Heart right ventricle (tissue), 16 donors: ENCODE measurements at regions of chr7 and their contacts with region 1.

Region 1: DNA sequence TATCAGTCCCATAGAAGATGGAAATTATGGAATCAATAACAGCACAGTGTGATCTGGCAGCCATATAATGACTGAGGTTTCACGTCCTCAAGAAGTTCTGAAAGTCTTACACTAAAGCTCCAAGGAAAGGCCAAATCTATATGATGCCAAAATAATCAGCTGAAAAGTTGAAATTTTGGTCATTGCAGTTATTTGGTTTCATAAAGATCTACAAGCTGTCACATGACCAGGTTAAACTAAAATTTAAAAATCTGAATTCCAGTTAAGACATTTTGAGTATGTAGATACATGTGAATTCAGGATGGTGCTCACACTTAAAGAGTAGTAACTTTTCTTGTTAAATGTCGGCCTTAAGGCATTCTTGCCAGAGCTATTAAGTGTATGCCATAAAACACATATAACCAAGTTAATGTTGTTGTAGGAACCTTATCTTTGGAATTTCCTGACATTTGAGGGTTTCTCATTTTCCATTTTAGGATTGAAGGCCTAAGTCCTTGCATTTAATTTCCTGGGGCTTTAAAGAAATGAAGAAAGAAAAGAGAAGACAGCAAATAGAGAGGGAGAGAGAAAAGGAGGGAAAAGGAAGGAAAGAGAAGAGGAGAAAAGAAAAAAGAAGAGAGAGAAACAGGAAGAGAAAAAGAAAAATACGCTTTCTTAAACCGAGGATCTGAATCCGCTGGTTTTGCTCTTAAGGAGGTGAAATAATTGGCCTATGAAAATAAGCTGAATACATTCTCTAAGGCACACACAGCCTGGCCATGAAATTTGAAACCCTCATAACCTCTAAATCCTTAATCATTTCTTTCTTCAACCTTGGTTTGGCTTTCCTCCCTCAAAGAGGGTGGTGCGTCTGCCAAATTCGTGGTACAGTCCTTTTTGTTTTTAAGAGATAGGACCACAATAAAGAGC is 43.8 kb downstream of the DENND2A start:
- DNase-seq: no peak
- ATAC-seq: peak in 3 of 8 donors; percentile 10 to 39 (median 31)
- H3K4me3 ChIP-seq: no peak overlapping the region
- H3K27ac ChIP-seq: peak overlapping the region in 8 of 10 donors; percentile 10 to 72 (median 55)
- H3K4me1 ChIP-seq: peaks cover 0 to 48% (median 11%) of the 10 kb centered on the region in 9 donors
- H3K27me3 ChIP-seq: no peaks in the 10 kb centered on the region
- CTCF ChIP-seq: no peak

Region 2: DNA sequence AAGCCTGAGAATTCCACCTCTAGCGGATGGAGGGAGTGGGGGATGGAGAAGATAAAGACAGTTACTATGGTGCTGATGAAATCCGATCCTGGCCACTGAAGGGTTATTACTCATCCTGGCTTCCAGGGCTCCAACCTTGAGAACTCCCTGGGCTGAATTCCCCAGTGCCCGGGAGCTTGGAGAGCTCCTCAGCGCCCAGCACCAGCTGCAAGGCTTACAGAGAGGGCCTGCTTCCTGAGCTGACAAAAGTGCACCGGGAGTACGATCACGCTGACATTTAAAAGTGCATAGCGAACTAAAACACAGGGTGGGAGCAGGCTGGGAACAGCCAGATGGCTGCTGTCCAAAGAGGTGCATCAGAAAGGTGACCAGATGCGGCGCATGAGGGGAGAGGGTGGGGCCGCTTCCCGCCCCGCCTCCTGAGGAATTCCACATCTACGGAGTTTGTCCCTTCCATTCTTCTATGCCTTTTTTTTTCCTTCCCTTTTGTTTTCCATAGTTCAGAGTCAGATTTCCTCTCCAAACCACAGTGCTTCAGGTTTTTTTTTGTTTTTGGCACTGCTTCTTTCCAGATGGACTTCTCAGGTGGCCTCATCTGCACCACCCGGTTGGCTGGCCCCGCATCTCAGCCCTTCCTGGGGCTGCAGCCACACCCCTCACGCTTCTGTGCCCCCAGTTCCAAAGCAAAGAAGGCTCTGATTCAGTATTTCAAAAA is 55.1 kb before region 1 on chr7:
- intact Hi-C with region 1: loop called in 1 of 10 experiments (anchors 5 kb)
- DNase-seq: peak; percentile 38 to 66
- ATAC-seq: peak; percentile 60 to 93 (median 84)
- H3K4me3 ChIP-seq: peak overlapping the region in 6 of 10 donors; percentile 2 to 16 (median 3)
- H3K27ac ChIP-seq: peak overlapping the region; percentile 49 to 89 (median 66)
- H3K4me1 ChIP-seq: peaks cover 12 to 33% (median 21%) of the 10 kb centered on the region in 9 donors
- H3K27me3 ChIP-seq: no peaks in the 10 kb centered on the region
- CTCF ChIP-seq: no peak

Region 3: DNA sequence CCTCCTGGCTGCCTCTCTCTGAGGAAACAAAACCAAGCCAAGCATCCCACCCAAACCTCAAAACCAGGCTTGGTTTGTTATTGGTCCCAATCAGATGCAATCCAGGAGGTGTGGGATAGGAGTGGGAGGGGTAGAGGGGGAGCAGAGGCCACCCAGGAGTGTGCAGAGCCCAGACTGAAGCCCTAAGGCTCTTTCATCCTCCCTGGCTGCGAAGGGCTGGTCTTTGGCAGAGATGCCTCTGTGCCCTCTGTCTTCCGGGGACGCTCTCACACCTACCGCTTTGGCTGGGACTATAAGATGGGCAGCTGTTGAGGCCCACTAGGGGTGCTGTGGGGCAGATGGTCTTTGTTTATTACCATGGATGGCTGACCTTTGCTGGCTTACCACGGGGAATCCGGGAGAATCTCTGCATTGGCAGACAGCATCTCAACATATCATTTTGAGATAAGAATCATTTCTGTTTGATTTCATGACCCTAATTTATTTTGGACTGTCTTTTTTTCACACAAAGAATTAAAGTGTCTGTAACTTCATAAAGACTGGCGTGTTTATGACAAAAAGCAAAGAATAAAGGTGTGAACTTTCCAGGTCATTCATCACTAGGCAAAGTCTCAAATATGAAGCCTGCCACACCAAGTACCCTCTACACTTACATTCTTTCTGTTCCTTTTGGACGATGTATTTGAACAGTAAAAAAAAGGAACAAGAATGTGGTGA is 50.3 kb after region 1 on chr7:
- intact Hi-C with region 1: loop called in 2 of 10 experiments (anchors 10 kb)
- DNase-seq: peak in 1 of 2 donors; percentile 31
- ATAC-seq: peak in 7 of 8 donors; percentile 38 to 74 (median 63)
- H3K4me3 ChIP-seq: no peak overlapping the region
- H3K27ac ChIP-seq: no peak overlapping the region
- H3K4me1 ChIP-seq: peaks cover 0 to 17% (median 5%) of the 10 kb centered on the region in 9 donors
- H3K27me3 ChIP-seq: peaks cover 0 to 17% (median 0%) of the 10 kb centered on the region in 7 donors
- CTCF ChIP-seq: peak in 8 of 9 donors; percentile 30 to 60 (median 56)

Region 4: DNA sequence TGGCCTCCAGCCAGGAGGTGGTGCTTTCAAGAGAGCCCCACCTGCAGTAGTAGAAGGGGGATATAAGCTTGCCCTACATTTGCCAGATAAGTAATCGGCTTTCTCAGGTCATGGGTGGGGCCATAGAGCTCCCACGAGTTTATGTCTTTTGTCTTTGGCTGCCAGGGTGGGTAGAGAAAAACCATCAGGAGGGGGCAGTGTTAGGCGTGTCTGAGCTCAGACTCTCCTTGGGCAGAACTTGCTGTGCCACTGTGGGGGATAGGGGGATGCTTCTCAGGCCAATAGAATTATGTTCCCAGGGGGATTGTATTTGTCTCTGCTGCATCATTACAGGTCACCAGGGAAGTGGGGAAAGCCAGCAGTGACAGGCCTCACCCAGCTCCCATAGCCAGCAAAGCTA is 430.3 kb after region 1 on chr7:
- intact Hi-C with region 1: no loop called
- DNase-seq: no peak
- ATAC-seq: no peak
- H3K4me3 ChIP-seq: no peak overlapping the region
- H3K27ac ChIP-seq: no peak overlapping the region
- H3K4me1 ChIP-seq: no peaks in the 10 kb centered on the region
- H3K27me3 ChIP-seq: peaks cover 0 to 29% (median 7%) of the 10 kb centered on the region in 7 donors
- CTCF ChIP-seq: peak in 1 of 9 donors; percentile 5